ENCODE measurements at regions of chr2 and their contacts with region 1.

Region 1: DNA sequence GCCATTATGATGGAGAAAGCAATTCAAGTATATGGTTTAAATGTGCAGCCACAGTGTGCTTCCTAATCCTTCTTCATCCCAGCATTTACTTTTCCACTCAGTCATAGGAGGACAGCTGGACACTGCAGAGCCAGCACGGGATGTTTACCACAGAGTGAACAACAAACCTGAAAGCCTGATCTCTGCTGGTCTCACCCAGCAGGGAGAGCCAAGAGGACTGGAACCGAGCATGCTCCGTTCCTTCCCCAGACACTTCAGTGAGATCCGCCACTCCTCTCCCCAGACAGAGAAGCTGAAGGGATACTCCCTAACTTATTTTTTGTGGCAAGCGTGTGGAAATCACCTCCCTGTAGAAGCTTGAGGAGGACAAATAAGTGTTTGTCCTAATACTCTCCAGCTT is 23.2 kb upstream of the GORASP2 start:
- DNase-seq: no peak
- ATAC-seq: no peak
- H3K4me3 ChIP-seq: no peak overlapping the region
- H3K27ac ChIP-seq: no peak overlapping the region
- H3K4me1 ChIP-seq: no peaks in the 10 kb centered on the region
- H3K27me3 ChIP-seq: no peaks in the 10 kb centered on the region
- CTCF ChIP-seq: no peak

Region 2: DNA sequence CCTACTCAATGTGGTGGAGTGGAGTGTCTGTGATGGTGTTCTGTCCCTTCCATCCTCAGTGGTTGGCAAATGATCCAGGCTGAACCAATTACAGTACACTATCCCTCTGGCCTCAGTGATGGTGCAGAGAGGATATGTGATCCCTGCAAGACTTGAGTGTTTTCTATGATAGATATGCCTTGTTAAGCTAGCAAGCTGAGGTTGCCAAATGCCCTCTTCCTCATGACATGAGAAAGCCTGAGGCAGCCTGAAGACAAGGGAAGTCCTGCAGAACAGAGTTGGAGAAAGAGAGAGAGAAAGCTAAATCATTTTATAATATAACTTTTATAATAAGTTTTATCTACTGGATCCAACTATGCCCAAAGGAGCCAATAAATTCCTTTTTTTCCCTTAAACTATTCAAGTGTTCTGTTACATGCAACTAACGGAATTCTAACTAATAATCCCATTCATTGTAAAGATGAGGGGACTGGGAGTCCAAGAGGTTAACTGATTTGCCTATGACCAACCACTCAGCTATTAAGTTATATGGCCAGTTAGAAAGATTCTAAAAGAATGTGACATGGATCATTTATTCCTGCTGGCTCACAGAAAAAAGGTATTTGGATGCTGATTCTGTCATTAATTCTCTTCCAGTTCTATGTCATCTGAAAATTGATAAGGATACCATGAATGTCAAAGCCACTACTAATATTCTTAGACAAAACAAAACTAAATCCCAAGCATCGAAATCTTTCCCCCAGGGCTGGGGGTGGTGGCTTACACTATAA is 18.2 kb before region 1 on chr2:
- CTCF ChIA-PET with region 1: no interaction called
- POLR2A ChIA-PET with region 1: no interaction called
- intact Hi-C with region 1: loop called (anchors 2 kb)
- DNase-seq: no peak
- ATAC-seq: no peak
- H3K4me3 ChIP-seq: no peak overlapping the region
- H3K27ac ChIP-seq: no peak overlapping the region
- H3K4me1 ChIP-seq: no peaks in the 10 kb centered on the region
- H3K27me3 ChIP-seq: no peaks in the 10 kb centered on the region
- CTCF ChIP-seq: no peak

Measured in PC-3 (cell line).